Right lobe of liver (tissue), 6 donors: ENCODE measurements at regions of chr14 and their contacts with region 1.

Region 1: DNA sequence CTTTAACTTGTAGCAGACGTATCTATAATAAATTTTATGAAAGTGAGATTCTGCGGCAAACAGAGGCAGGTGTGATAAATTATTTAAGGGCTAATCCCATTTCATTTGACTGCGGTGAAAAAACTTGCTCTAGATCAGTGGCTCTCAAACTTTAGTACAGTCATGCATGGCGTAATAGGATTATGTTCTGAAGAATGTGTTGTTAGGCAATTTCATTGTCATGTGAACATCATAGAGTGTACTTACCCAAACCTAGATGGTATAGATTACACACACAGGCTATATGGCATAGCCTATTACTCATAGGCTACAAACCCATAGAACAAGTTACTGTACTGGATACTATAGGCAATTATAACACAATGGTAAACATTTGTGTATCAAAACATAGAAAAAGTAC is 83.7 kb downstream of the HEATR5A start:
- DNase-seq: no peak
- ATAC-seq: no peak
- H3K4me3 ChIP-seq: no peak overlapping the region
- H3K27ac ChIP-seq: no peak overlapping the region
- H3K4me1 ChIP-seq: peaks cover 0 to 16% (median 4%) of the 10 kb centered on the region in 4 donors
- H3K27me3 ChIP-seq: no peaks in the 10 kb centered on the region
- CTCF ChIP-seq: no peak
- POLR2A ChIP-seq: no peak

Region 2: GRCh38 chr14:31106768-31107167 is 229.9 kb before region 1 on chr14:
- intact Hi-C with region 1: loop called in 1 of 2 experiments (anchors 10 kb)
- DNase-seq: no peak
- ATAC-seq: no peak
- H3K4me3 ChIP-seq: no peak overlapping the region
- H3K27ac ChIP-seq: no peak overlapping the region
- H3K4me1 ChIP-seq: no peaks in the 10 kb centered on the region
- H3K27me3 ChIP-seq: no peaks in the 10 kb centered on the region
- CTCF ChIP-seq: no peak
- POLR2A ChIP-seq: no peak

Region 3: DNA sequence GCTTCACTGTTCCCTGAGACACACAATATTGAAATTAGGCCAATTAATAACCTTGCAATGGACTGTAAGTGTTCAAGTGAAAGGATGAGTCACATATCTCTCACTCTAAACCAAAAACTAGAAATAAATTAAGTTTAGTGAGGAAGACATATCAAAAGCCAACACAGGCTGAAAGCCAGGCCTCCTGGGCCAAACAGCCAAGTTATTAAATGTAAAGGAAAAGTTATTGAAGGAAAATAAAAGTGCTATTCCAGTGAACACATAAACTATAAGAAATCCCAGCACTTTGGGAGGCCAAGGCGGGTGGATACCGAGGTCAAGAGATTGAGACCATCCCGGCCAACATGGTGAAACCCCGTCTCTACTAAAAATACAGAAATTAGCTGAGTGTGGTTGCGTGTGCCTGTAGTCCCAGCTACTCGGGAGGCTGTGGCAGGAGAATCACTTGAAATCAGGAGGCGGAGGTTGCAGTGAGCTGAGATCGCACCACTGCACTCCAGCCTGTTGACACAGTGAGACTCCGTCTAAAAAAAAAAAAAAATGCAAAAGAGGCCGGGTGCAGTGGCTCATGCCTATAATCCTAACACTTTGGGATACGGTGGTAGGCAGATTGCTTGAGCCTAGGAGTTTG is 94.1 kb after region 1 on chr14:
- intact Hi-C with region 1: no loop called
- DNase-seq: no peak
- ATAC-seq: no peak
- H3K4me3 ChIP-seq: no peak overlapping the region
- H3K27ac ChIP-seq: no peak overlapping the region
- H3K4me1 ChIP-seq: no peaks in the 10 kb centered on the region
- H3K27me3 ChIP-seq: no peaks in the 10 kb centered on the region
- CTCF ChIP-seq: no peak
- POLR2A ChIP-seq: no peak